Heart right ventricle (tissue), 16 donors: ENCODE measurements at regions of chr3 and their contacts with region 1.

Region 1: GRCh38 chr3:23468203-23468602 is 265.1 kb downstream of the UBE2E2 start:
- DNase-seq: no peak
- ATAC-seq: no peak
- H3K4me3 ChIP-seq: no peak overlapping the region
- H3K27ac ChIP-seq: no peak overlapping the region
- H3K4me1 ChIP-seq: peaks cover 0 to 13% (median 0%) of the 10 kb centered on the region in 9 donors
- H3K27me3 ChIP-seq: no peaks in the 10 kb centered on the region
- CTCF ChIP-seq: no peak

Region 2: DNA sequence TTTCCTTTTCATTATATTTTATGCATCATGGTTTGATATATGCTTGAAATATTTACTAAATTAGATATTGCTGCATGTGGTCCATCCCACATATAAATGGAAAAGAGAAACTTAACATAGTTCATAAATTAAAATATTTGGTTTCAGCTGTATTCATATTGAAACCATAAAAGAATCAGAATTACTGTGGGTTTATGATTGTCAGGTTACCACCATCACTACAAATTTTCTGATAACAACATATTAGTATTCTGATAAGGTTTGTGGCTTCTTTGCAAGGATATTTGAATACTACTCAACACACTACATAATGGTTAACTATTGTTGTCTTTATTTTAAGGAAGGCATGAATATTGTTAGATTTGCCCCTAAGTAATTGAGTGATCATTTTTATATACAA is 29.5 kb before region 1 on chr3:
- intact Hi-C with region 1: loop called in 1 of 10 experiments (anchors 2 kb)
- DNase-seq: no peak
- ATAC-seq: no peak
- H3K4me3 ChIP-seq: no peak overlapping the region
- H3K27ac ChIP-seq: peak overlapping the region in 1 of 10 donors; percentile 8
- H3K4me1 ChIP-seq: peaks cover 0 to 35% (median 8%) of the 10 kb centered on the region in 9 donors
- H3K27me3 ChIP-seq: no peaks in the 10 kb centered on the region
- CTCF ChIP-seq: no peak

Region 3: GRCh38 chr3:23519314-23520208 is 51.4 kb after region 1 on chr3:
- intact Hi-C with region 1: no loop called
- DNase-seq: no peak
- ATAC-seq: no peak
- H3K4me3 ChIP-seq: no peak overlapping the region
- H3K27ac ChIP-seq: no peak overlapping the region
- H3K4me1 ChIP-seq: peaks cover 0 to 6% (median 0%) of the 10 kb centered on the region in 9 donors
- H3K27me3 ChIP-seq: no peaks in the 10 kb centered on the region
- CTCF ChIP-seq: no peak